ENCODE measurements at regions of chr1 and their contacts with region 1.

Region 1: GRCh38 chr1:23634842-23635651 is 56.6 kb upstream of the RPL11 start:
- DNase-seq: peak; percentile 84
- ATAC-seq: peak; percentile 87
- H3K4me3 ChIP-seq: peak overlapping the region in 4 of 5 experiments; percentile 18 to 66 (median 46)
- H3K4me3 Mint-ChIP-seq: peak overlapping the region; percentile 78
- H3K27ac ChIP-seq: peak overlapping the region; percentile 43 to 74
- H3K27ac Mint-ChIP-seq: peak overlapping the region; percentile 94
- H3K4me1 ChIP-seq: peaks cover 29 to 50% of the 10 kb centered on the region in 2 donors
- H3K4me1 Mint-ChIP-seq: peaks cover 51% of the 10 kb centered on the region
- H3K27me3 ChIP-seq: no peaks in the 10 kb centered on the region
- H3K27me3 Mint-ChIP-seq: no peaks in the 10 kb centered on the region
- CTCF ChIP-seq: peak; percentile 86

Region 2: DNA sequence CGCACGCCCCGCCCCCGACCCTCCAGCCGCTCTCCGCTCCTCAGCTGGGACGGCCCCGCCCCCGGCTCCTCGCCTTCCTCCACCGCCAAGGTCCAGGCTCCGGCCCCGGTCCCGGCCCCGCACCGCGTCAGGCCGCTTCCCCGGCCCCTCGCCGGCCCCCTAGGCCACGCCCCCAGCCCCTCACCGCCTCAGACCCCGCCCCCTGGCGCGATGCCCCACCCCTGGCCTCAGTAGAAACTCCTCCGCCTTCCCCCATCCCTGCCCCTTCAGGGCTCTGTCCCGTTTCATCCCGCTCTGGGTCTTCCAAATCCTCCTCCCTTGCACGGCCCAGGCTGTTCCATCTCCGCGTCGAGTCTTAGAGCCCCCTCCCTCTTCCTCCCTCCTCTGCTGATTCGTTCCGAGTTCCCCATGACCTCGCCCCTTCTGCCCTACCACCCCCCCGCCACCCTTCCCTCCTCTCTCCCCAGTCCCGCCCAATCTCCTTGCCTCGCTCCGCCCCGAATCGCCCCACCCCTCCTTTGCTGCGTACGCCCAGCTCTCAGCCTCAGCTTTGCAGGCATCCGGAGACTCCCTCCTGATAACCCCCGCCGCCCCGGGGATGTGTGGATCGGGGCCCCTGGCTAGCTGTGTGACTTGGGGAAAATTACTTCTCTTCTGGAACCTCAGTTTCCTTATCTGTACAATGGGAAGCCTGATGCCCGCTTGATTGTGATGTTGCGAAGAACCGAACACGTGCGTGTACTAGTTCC is 150.6 kb before region 1 on chr1:
- CTCF ChIA-PET with region 1: interaction called, 7 read pairs
- POLR2A ChIA-PET with region 1: interaction called, 3 read pairs
- intact Hi-C with region 1: loop called (anchors 5 kb)
- DNase-seq: peak; percentile 94
- ATAC-seq: peak; percentile 85
- H3K4me3 ChIP-seq: peak overlapping the region in 4 of 5 experiments; percentile 43 to 79 (median 66)
- H3K4me3 Mint-ChIP-seq: peak overlapping the region; percentile 90
- H3K27ac ChIP-seq: no peak overlapping the region
- H3K27ac Mint-ChIP-seq: peak overlapping the region; percentile 82
- H3K4me1 ChIP-seq: peaks cover 14 to 23% of the 10 kb centered on the region in 2 donors
- H3K4me1 Mint-ChIP-seq: peaks cover 29% of the 10 kb centered on the region
- H3K27me3 ChIP-seq: peaks cover 0 to 22% (median 8%) of the 10 kb centered on the region in 4 experiments
- H3K27me3 Mint-ChIP-seq: peaks cover 25% of the 10 kb centered on the region
- CTCF ChIP-seq: peak; percentile 2

Region 3: DNA sequence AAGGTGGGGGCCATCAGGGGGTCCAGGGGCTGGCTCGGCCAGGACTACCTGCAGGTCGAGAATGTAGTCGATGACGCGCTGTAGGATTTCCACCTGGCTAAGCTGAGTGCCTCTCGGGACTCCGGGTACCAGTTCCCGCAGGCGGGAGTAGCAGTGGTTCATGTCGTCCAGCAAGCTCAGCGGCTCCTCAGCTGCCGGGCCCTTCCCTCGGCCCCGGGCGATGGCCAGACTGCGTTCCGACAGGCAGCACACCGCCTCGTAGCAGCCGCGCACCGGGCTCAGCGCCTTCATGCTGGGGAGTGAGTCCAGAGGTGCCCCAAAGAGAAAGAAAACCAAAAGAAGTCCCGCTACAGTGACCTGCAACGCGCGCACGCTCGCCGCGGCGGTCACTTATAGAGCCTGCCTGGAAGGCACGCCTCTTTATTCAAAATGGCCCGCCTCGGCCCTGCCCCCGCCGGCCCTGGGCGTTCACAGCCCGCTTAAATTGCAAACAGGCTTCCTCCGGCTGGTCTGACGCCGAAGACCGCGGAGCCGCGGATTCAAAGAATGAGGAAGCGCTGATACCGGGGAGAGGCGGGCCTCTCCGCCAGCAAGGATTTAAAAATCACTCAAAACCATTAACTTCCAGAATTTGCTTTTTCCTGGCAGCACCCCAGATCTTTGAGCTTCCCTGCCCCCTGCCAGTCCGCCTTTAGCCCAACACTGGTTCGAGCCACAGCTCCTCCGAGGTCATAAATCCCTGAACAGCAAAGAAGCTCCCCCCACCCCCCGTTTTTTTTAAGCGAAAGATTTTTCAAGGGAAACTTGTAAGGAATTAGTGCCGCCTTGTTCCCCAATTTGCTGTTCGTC is 75.7 kb before region 1 on chr1 and contains the start of gene ID3:
- CTCF ChIA-PET with region 1: interaction called, 1,420 read pairs
- POLR2A ChIA-PET with region 1: interaction called, 36 read pairs
- intact Hi-C with region 1: loop called (anchors 1 kb)
- DNase-seq: peak; percentile 97
- ATAC-seq: peak; percentile 73
- H3K4me3 ChIP-seq: peak within 1 kb of the TSS; percentile 87 to 100 (median 95)
- H3K4me3 Mint-ChIP-seq: peak within 1 kb of the TSS; percentile 93
- H3K27ac ChIP-seq: peak within 1 kb of the TSS; percentile 83 to 91
- H3K27ac Mint-ChIP-seq: peak within 1 kb of the TSS; percentile 94
- H3K4me1 ChIP-seq: peaks cover 66 to 75% of the 10 kb centered on the region in 2 donors
- H3K4me1 Mint-ChIP-seq: peaks cover 72% of the 10 kb centered on the region
- H3K27me3 ChIP-seq: no peaks in the 10 kb centered on the region
- H3K27me3 Mint-ChIP-seq: no peaks in the 10 kb centered on the region
- CTCF ChIP-seq: no peak
- total RNA-seq, gene ID3: 367 and 370 TPM in 2 replicates

Region 4: DNA sequence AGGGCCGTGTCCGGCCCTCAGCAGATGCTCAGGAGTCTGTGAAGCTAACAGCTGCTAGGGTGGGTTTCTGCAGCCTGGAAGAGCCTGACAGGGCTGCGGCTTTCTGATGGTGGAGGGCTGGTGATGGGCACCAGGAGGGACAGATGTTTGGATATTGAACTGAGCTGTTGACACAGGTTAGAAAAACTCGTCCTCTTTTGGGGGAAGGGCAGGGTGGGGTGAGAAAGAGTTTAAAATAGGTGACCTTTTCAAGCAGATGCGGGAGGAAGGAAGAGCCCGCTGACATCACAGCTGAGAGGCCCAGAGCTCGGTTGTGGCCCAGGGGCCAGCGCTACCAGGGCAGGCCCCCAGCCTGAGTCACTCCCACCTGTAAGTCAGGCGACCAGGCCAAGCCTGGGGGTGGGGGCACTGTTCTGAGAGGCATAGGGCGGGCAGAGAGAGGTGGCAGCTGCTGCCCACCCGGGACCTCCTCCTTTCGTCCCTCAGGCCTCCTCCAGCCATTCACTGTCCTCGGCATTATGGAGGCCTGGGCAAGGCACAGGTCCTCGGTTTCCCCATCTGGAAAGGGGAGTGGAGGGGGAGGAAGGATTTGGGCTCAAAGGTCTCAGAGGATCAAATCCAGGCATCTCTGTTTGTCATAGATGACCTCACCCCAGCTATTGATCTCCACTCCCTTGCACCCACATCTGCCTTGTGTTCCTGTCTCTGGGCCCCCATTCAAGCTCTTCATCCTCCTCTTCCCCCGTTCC is 43.4 kb before region 1 on chr1:
- CTCF ChIA-PET with region 1: interaction called, 250 read pairs
- POLR2A ChIA-PET with region 1: interaction called, 15 read pairs
- intact Hi-C with region 1: loop called (anchors 2 kb)
- DNase-seq: peak; percentile 62
- ATAC-seq: peak; percentile 85
- H3K4me3 ChIP-seq: peak overlapping the region in 1 of 5 experiments; percentile 31
- H3K4me3 Mint-ChIP-seq: peak overlapping the region; percentile 81
- H3K27ac ChIP-seq: peak overlapping the region; percentile 81 to 83
- H3K27ac Mint-ChIP-seq: peak overlapping the region; percentile 96
- H3K4me1 ChIP-seq: peaks cover 84 to 85% of the 10 kb centered on the region in 2 donors
- H3K4me1 Mint-ChIP-seq: peaks cover 86% of the 10 kb centered on the region
- H3K27me3 ChIP-seq: no peaks in the 10 kb centered on the region
- H3K27me3 Mint-ChIP-seq: no peaks in the 10 kb centered on the region
- CTCF ChIP-seq: no peak

Region 5: GRCh38 chr1:23651069-23651808 is 16.2 kb after region 1 on chr1:
- CTCF ChIA-PET with region 1: interaction called, 10 read pairs
- POLR2A ChIA-PET with region 1: no interaction called
- intact Hi-C with region 1: no loop called
- DNase-seq: no peak
- ATAC-seq: no peak
- H3K4me3 ChIP-seq: no peak overlapping the region
- H3K4me3 Mint-ChIP-seq: no peak overlapping the region
- H3K27ac ChIP-seq: no peak overlapping the region
- H3K27ac Mint-ChIP-seq: no peak overlapping the region
- H3K4me1 ChIP-seq: no peaks in the 10 kb centered on the region
- H3K4me1 Mint-ChIP-seq: peaks cover 4% of the 10 kb centered on the region
- H3K27me3 ChIP-seq: peaks cover 0 to 8% (median 1%) of the 10 kb centered on the region in 4 experiments
- H3K27me3 Mint-ChIP-seq: peaks cover 7% of the 10 kb centered on the region
- CTCF ChIP-seq: no peak

Measured in B cell (primary cell).